Right ventricle myocardium superior (tissue), 1 donor: ENCODE measurements at regions of chr7 and their contacts with region 1.

Region 1: DNA sequence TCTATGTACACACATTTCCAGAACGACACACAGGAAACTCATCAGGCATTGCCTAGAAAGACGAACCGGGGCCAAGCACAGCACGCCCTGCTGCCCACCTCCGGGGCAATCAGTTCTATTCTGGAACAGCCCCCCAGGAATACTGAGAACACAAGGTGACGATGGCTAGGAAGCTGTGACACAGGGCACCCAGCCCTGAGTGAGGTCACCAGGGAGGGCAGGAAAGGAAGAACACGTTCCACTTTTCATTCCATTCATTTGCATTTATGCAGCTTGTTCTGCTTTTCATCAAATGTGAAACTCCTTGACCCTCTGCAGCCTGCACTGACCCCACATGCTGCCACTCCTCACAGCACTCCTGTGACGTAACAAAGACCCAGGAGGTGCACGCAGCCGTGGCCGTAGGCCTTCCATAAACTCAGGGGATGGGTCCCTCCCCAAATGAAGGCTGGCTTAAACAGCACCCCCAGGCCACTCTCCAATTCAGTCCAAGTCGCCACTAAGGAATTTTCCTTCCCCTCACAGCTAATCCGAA is 28.9 kb downstream of the MAD1L1 start:
- DNase-seq: peak; percentile 28
- ATAC-seq: peak; percentile 63

Region 2: DNA sequence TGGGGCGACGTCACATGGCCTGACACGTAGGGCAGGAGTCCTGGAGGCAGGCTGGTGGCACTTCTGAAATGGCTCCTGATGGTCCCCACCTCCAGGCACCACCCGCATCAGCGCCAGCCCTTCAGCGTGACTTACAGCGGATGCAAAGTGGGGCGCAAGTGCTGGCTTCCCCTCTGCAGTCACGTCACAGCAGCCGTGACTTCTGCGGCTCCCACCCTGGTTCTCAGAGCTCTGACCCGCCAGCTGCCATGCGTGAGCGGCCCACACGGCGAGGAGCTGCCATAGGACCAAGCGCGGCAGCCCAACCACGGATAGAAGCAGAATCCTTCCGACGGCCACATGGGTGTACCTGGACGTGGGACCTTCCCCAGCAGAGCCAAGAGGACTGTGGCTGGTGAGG is 374.7 kb before region 1 on chr7:
- intact Hi-C with region 1: no loop called
- DNase-seq: peak; percentile 26
- ATAC-seq: no peak

Region 3: DNA sequence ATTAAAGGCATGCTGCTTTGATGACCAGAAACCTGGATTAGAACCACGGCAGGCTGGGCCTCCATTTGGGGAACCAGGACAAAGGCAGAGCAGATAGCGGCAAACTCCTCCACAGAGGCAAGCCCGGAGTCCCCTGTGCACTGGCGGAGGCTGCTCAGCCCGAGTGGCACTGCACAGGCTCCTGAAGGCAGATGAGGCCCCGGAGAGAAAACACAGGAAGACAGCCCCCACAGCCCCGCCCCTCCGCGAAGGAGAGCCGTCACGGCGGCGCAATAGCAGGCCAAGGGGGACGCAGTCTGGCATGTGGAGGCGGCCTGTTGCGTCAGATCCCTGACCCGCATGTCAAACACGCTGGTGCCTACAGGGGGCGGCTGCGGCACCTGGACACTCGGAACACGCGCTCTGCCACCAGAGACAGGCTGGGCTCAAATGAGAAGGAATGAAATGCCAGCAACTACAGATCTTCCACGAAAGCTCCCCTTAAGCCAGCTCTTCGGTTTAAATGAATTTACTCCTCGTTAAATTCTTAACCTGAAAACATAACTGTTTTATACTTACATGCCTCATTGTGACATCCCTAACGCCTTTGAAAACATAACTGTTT is 99.6 kb before region 1 on chr7:
- intact Hi-C with region 1: loop called (anchors 5 kb)
- DNase-seq: peak; percentile 93
- ATAC-seq: peak; percentile 90

Region 4: DNA sequence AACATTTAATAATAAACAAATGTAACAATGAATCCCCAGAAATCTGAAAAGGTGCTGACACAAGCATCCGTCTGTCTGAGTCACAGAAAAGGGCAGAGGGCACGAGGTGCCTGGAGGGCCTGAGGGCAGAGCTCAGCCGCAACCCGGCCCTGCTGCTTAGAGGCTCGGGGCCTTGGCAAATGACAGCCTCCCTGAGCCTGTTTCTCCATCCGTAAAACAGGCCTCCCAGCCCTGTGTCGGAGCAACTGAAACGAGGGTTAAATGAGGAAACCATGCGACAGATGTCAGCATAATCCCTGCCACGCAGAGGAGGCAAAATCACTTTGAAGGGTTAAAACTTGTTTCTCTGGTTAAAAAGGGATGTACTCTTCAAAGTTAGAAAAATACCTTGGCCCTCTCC is 63.1 kb after region 1 on chr7:
- intact Hi-C with region 1: no loop called
- DNase-seq: no peak
- ATAC-seq: no peak